Activated CD4-positive, alpha-beta memory T cell treated with anti-CD3 and anti-CD28 coated beads for 36 hours (primary cell): ENCODE measurements at regions of chr19 and their contacts with region 1.

Region 1: DNA sequence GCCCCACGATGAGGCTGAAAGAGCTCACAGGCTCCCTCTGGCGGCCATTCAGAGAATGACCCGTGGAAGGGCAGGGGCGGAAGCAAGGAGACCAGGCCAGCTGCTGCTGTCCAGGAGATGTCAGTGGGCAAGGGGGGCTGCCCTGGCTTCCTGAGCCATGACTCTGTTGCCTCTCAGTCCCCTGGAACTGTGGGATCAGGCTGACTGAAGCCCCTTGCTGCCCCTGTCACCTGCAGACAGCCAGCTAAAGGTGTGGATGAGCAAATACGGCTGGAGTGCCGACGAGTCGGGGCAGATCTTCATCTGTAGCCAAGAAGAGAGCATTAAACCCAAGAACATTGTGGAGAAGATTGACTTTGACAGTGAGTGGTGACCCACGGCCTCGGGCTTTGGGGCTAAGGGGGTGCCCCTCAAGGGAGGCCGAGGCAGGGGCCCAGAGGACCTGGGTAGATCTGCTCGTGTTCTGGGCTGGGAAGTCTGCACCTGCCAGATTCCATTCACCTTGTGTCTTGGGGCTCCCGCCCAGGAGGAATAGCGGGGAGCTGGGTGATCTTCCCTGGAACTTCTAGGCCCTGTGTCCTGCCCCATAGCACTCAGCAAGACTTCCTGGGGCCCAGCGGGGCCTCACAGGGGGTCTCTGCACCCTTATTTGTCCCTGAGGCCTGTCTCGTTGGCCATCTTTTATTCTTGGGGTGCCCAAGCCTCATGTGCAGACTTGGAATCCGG is 12.5 kb upstream of the ACTN4 start:
- DNase-seq: peak; percentile 83
- H3K4me3 Mint-ChIP-seq: no peak overlapping the region
- H3K27ac Mint-ChIP-seq: peak overlapping the region; percentile 81
- H3K4me1 Mint-ChIP-seq: peaks cover 30% of the 10 kb centered on the region
- H3K27me3 Mint-ChIP-seq: no peaks in the 10 kb centered on the region

Region 2: GRCh38 chr19:38544034-38544958 is 90.6 kb before region 1 on chr19:
- CTCF ChIA-PET with region 1: interaction called, 75 read pairs
- POLR2A ChIA-PET with region 1: no interaction called
- intact Hi-C with region 1: loop called (anchors 1 kb)
- DNase-seq: peak; percentile 65
- H3K4me3 Mint-ChIP-seq: peak overlapping the region; percentile 51
- H3K27ac Mint-ChIP-seq: peak overlapping the region; percentile 30
- H3K4me1 Mint-ChIP-seq: peaks cover 24% of the 10 kb centered on the region
- H3K27me3 Mint-ChIP-seq: no peaks in the 10 kb centered on the region

Region 3: DNA sequence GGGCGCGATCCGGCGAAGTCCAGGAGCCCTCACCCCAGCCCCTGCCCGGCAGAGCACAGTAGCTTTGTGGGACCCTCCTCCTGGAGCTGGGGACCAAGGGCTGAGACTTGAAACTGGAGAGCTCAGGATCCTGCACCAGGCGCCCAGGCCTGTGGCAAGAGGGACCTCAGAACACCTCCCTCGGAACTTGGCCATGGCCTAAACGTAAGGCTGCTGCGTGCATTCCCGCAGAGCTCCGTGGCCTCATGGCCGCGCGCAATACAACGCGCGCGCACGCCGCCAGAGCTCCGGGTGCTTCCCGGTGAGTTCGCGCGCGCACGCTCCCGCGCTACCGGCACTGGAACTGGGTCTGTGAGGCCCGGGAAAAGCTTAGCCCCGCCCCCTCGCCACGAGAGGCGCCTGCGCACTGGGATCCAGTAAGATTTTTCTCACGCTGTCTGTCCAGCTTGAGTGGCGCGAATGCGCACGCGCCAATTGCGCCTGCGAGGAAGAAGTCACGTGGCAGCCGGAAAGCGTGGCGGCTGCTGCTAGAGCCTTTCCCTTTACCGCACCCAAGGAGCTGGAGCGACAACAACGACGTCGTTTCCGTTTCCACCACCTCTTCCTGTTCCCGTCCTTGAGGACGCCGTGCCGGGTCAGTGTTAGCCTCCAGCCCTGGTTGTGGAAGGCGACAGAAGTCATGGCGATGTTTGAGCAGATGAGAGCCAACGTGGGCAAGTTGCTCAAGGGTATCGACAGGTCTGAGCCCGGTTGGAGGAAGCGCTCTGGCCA is 16.1 kb before region 1 on chr19 and contains the start of gene EIF3K:
- CTCF ChIA-PET with region 1: interaction called, 80 read pairs
- POLR2A ChIA-PET with region 1: interaction called, 4 read pairs
- intact Hi-C with region 1: loop called (anchors 2 kb)
- DNase-seq: peak; percentile 99
- H3K4me3 Mint-ChIP-seq: peak within 1 kb of the TSS; percentile 99
- H3K27ac Mint-ChIP-seq: peak within 1 kb of the TSS; percentile 92
- H3K4me1 Mint-ChIP-seq: peaks cover 34% of the 10 kb centered on the region
- H3K27me3 Mint-ChIP-seq: no peaks in the 10 kb centered on the region
- total RNA-seq, gene EIF3K: 273 to 287 TPM

Region 4: DNA sequence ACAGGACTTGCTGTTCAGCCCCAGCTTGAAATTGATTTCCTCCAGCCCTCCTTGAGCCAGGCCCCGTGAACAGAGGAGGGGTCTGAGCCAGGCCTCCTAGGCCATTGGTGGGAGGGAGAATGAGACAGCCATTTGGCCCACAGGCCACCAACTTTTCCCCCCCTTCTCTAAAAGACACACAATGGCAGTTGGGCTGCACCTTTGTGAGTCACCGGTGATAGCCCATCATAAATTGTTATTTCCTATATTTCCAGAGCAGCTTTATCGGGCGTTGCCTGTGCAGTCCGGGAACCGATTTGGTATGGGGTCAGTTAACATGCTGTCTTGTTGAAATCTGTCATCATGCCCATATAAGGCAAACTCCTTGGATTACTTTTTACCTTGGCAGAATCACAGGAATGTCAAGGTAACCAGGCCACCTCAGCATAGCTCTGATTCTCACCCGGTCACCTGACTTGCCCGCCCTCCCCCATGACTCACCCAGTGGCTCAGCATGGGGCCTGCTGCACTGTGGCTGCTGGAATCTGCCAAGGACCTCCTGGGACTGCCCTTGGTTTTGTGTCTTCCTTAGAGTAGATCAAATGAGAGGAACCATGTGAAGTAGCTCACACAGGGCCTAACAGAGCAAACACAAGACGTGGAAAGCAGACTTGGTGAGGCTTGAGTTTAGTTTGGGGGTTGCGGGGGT is 48.6 kb after region 1 on chr19:
- CTCF ChIA-PET with region 1: interaction called, 10 read pairs
- POLR2A ChIA-PET with region 1: no interaction called
- intact Hi-C with region 1: loop called (anchors 10 kb)
- DNase-seq: peak; percentile 82
- H3K4me3 Mint-ChIP-seq: no peak overlapping the region
- H3K27ac Mint-ChIP-seq: peak overlapping the region; percentile 81
- H3K4me1 Mint-ChIP-seq: peaks cover 86% of the 10 kb centered on the region
- H3K27me3 Mint-ChIP-seq: no peaks in the 10 kb centered on the region

Region 5: GRCh38 chr19:38838573-38839269 is 203.8 kb after region 1 on chr19:
- CTCF ChIA-PET with region 1: no interaction called
- POLR2A ChIA-PET with region 1: no interaction called
- intact Hi-C with region 1: loop called (anchors 5 kb)
- DNase-seq: peak; percentile 87
- H3K4me3 Mint-ChIP-seq: no peak overlapping the region
- H3K27ac Mint-ChIP-seq: peak overlapping the region; percentile 82
- H3K4me1 Mint-ChIP-seq: peaks cover 63% of the 10 kb centered on the region
- H3K27me3 Mint-ChIP-seq: no peaks in the 10 kb centered on the region